Stomach (tissue), 19 donors: ENCODE measurements at regions of chr5 and their contacts with region 1.

Region 1: DNA sequence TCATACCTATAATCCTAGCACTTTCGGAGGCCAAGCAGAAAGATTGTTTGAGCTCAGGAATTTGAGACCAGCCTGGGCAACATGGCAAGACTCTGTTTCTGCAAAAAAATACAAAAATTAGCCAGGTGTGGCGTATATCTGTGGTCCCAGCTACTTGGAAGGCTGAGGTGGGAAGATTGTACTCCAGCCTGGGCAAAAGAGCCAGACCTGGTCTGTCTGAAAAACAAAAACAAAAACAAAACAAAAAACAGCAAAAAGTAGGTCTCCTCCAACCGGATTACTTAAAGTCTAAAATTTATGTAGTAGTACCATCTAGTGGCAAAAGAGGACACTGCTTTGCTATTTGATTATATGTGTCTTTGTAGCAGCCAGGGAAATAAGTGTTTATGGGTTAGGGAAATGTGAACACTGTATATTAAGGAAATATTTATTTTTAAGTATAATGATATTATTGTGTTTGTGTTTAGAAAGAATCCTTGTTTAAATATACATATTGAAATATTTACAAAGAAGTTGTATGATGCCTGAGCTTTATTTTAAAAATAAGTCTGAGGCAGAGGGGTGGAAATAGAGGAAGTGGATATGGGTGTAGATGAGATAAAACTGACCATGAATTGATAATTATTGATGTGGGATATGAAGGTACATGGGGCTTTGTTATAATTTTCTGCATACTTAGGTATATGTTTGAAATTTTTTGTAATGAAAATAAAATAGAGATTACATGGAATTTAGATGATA is 20.0 kb downstream of the APC start:
- DNase-seq: peak in 1 of 2 donors; percentile 81
- H3K4me3 ChIP-seq: no peak overlapping the region
- H3K27ac ChIP-seq: peak overlapping the region in 1 of 5 donors; percentile 11
- H3K4me1 ChIP-seq: peaks cover 0 to 13% (median 3%) of the 10 kb centered on the region in 4 donors
- H3K27me3 ChIP-seq: no peaks in the 10 kb centered on the region
- CTCF ChIP-seq: peak in 5 of 7 experiments; percentile 71 to 84 (median 79)
- EP300 ChIP-seq: no peak
- POLR2A ChIP-seq: no peak

Region 2: DNA sequence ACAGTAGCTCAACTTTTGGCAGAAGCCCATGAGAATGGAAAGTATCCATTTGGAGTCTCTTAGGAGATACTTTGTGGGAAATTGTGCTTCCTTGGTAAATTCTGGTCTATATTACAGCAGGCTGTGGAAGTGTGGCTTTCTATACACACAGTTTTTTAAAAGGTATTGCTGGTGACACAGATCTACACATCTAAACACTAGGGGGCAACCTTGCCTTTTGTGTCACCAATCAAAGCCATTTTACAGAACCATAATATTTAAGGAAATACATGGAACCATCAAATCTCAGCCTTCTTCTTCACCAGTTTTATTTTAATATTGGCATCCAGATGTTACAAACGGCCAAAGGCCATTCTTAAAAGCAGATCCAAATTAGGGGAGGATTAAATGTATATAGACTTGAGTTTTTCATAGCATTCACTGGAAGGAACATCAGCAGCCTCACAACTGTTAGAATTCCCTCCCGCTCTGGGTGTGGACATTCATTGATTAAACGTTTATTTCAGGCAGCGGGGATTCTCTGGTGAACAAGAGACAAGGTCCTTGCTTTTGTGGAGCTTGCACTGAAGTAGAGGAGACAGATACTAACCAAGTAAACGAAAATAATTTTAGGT is 206.1 kb before region 1 on chr5:
- intact Hi-C with region 1: loop called (anchors 5 kb)
- DNase-seq: peak in 1 of 2 donors; percentile 91
- H3K4me3 ChIP-seq: no peak overlapping the region
- H3K27ac ChIP-seq: no peak overlapping the region
- H3K4me1 ChIP-seq: peaks cover 0 to 14% (median 6%) of the 10 kb centered on the region in 4 donors
- H3K27me3 ChIP-seq: no peaks in the 10 kb centered on the region
- CTCF ChIP-seq: peak in 5 of 7 experiments; percentile 42 to 74 (median 60)
- EP300 ChIP-seq: no peak
- POLR2A ChIP-seq: no peak

Region 3: DNA sequence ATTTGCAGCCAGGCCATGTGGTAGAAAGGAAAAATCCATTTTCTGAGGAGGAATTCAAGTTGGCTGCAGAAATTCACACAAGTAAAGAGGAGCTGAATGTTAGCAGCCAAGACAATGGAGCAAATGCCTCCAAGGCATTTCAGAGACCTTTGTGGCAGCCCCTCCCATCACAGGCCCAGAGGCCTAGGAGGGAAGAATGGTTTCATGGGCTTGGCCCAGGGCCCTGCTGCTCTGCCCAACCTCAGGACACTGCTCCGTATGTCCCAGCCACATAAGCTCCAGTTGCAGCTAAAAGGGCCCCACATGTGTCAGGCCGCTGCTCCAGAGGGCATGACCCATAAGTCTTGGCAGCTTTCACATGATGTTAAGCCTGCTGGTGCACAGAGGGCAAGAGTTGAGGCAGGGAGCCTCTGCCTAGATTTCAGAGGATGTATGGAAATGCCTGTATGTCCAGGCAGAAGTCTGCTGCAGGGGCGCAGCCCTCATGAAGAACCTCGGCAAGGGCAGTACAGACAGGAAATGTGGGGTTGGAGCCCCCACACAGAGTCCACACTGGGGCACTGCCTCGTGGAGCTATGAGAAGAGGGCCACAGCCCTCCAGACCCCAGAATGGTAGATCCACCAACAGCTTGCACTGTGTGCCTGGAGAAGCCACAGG is 194.3 kb before region 1 on chr5:
- intact Hi-C with region 1: no loop called
- DNase-seq: no peak
- H3K4me3 ChIP-seq: no peak overlapping the region
- H3K27ac ChIP-seq: no peak overlapping the region
- H3K4me1 ChIP-seq: no peaks in the 10 kb centered on the region
- H3K27me3 ChIP-seq: no peaks in the 10 kb centered on the region
- CTCF ChIP-seq: no peak
- EP300 ChIP-seq: no peak
- POLR2A ChIP-seq: no peak

Region 4: DNA sequence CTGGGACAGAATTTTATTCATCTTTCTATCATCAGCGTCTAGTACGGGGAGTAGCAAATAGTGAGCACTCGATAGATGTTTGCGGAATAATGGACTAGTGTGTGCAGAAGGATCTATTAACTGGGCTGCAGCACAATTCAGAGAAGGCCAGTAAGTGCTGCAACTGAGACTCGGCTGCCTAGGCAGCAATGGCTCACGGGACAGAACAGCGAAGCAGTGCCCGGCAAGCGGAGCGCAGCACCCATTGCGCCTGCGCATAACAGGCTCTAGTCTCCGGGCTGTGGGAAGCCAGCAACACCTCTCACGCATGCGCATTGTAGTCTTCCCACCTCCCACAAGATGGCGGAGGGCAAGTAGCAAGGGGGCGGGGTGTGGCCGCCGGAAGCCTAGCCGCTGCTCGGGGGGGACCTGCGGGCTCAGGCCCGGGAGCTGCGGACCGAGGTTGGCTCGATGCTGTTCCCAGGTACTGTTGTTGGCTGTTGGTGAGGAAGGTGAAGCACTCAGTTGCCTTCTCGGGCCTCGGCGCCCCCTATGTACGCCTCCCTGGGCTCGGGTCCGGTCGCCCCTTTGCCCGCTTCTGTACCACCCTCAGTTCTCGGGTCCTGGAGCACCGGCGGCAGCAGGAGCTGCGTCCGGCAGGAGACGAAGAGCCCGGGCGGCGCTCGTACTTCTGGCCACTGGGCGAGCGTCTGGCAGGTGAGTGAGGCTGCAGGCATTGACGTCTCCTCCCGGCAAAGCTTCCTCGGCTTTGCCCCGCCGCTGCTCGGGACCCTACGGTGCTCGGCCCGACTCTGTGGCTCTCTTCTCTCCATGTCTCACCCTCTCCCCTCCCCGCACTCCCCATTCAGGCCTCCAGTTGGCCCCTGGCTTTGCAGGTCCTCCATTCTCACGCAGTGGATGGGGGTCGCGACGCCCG is 50.2 kb before region 1 on chr5:
- intact Hi-C with region 1: loop called (anchors 10 kb)
- DNase-seq: peak; percentile 97 to 99
- H3K4me3 ChIP-seq: peak overlapping the region; percentile 69 to 90 (median 72)
- H3K27ac ChIP-seq: peak overlapping the region; percentile 87 to 99 (median 90)
- H3K4me1 ChIP-seq: peaks cover 20 to 50% (median 30%) of the 10 kb centered on the region in 4 donors
- H3K27me3 ChIP-seq: no peaks in the 10 kb centered on the region
- CTCF ChIP-seq: no peak
- EP300 ChIP-seq: no peak
- POLR2A ChIP-seq: peak in 1 of 4 donors; percentile 61